ENCODE measurements at regions of chr21 and their contacts with region 1.

Region 1: GRCh38 chr21:45478115-45478801 is 64.0 kb downstream of the SLC19A1 start:
- DNase-seq: peak; percentile 89
- ATAC-seq: peak; percentile 74
- H3K4me3 Mint-ChIP-seq: peak overlapping the region; percentile 62
- H3K27ac Mint-ChIP-seq: peak overlapping the region; percentile 84
- H3K4me1 Mint-ChIP-seq: peaks cover 35% of the 10 kb centered on the region
- H3K27me3 Mint-ChIP-seq: no peaks in the 10 kb centered on the region

Region 2: DNA sequence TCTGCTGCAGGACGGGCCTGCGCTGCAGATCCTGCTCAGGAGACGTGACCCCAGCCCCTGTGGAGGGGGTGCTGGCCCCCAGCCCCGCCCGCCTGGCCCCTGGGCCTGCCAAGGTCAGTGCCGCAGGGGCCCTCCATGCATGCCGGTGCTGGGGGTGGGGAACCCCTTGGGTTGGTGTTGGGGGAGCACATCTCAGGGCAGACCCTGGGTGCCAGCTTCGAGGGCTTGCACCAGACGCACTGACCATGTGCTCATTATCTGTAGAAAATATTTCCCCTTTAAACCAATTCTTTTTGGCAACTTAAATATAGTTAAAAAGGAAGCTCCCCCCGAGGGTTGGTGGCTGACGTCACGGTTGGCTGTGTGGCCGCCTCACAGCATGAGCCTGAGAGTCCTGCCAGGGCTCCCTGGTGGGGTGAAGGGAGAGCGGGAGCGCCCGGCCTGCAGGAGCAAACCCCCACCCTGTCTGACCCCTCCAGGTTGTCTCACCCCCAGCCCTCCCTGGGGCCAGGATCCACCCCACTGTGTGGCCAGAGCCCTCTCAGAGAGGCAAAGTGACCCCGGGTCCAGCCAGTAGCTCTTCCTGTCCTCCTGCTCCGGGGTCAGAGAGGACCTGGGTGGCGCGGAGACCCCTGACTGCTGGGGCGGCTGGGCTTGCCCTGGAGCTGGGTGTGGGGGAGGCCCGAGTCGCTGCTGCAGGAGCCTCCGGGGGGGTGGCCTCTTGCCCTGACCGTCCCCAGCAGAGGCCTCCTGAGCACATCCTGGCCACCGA is 1183.7 kb before region 1 on chr21:
- CTCF ChIA-PET with region 1: no interaction called
- POLR2A ChIA-PET with region 1: no interaction called
- intact Hi-C with region 1: no loop called
- DNase-seq: no peak
- ATAC-seq: no peak
- H3K4me3 Mint-ChIP-seq: no peak overlapping the region
- H3K27ac Mint-ChIP-seq: no peak overlapping the region
- H3K4me1 Mint-ChIP-seq: peaks cover 29% of the 10 kb centered on the region
- H3K27me3 Mint-ChIP-seq: no peaks in the 10 kb centered on the region

Region 3: GRCh38 chr21:44761011-44761729 is 717.1 kb before region 1 on chr21:
- CTCF ChIA-PET with region 1: no interaction called
- POLR2A ChIA-PET with region 1: no interaction called
- intact Hi-C with region 1: no loop called
- DNase-seq: peak; percentile 53
- ATAC-seq: no peak
- H3K4me3 Mint-ChIP-seq: no peak overlapping the region
- H3K27ac Mint-ChIP-seq: peak overlapping the region; percentile 3
- H3K4me1 Mint-ChIP-seq: peaks cover 12% of the 10 kb centered on the region
- H3K27me3 Mint-ChIP-seq: no peaks in the 10 kb centered on the region

Region 4: GRCh38 chr21:45542242-45542666 is 64.0 kb after region 1 on chr21 and contains the start of gene SLC19A1:
- CTCF ChIA-PET with region 1: no interaction called
- POLR2A ChIA-PET with region 1: no interaction called
- intact Hi-C with region 1: loop called in 1 of 2 experiments (anchors 5 kb)
- DNase-seq: peak; percentile 86
- ATAC-seq: peak; percentile 86
- H3K4me3 Mint-ChIP-seq: peak within 1 kb of the TSS; percentile 80
- H3K27ac Mint-ChIP-seq: peak within 1 kb of the TSS; percentile 80
- H3K4me1 Mint-ChIP-seq: peaks cover 20% of the 10 kb centered on the region
- H3K27me3 Mint-ChIP-seq: no peaks in the 10 kb centered on the region
- total RNA-seq, gene SLC19A1: 46.1 to 50.0 TPM

Region 5: DNA sequence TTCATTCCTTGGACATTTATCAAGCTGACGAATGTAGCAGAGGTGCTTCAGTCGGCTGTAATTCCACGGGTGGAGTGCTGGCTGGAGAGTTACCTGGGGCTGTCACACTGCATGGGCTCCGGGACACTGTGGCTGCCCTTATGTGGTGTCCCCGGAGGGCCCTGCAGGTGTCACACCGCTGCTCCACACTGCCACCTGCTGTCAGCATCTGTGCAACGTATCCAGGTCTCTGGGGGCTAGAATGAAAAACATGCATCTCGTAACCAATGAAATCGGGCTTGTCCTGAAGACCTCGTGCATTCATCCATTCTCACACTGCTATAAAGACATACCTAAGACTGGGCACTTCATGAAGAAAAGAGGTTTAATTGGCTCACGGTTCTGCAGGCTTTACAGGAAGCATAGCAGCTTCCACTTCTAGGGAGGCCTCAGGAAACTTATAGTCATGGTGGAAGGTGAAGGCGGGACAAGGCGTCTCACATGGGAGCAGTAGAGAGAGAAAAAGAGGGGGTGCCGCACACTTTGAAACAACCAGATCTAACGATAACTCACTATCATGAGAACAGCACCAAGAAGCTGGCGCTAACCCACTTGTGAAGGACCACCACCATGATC is 118.6 kb after region 1 on chr21:
- CTCF ChIA-PET with region 1: interaction called, 3 read pairs
- POLR2A ChIA-PET with region 1: no interaction called
- intact Hi-C with region 1: loop called (anchors 1 kb)
- DNase-seq: peak; percentile 92
- ATAC-seq: peak; percentile 72
- H3K4me3 Mint-ChIP-seq: no peak overlapping the region
- H3K27ac Mint-ChIP-seq: peak overlapping the region; percentile 4
- H3K4me1 Mint-ChIP-seq: peaks cover 11% of the 10 kb centered on the region
- H3K27me3 Mint-ChIP-seq: no peaks in the 10 kb centered on the region

Region 6: GRCh38 chr21:45880097-45881068 is 402.1 kb after region 1 on chr21:
- CTCF ChIA-PET with region 1: no interaction called
- POLR2A ChIA-PET with region 1: no interaction called
- intact Hi-C with region 1: loop called in 1 of 2 experiments (anchors 1 kb)
- DNase-seq: peak; percentile 90
- ATAC-seq: peak; percentile 96
- H3K4me3 Mint-ChIP-seq: no peak overlapping the region
- H3K27ac Mint-ChIP-seq: peak overlapping the region; percentile 73
- H3K4me1 Mint-ChIP-seq: peaks cover 55% of the 10 kb centered on the region
- H3K27me3 Mint-ChIP-seq: no peaks in the 10 kb centered on the region

Measured in activated CD4-positive, alpha-beta T cell treated with anti-CD3 and anti-CD28 coated beads for 36 hours (primary cell).